ENCODE measurements at regions of chr15 and their contacts with region 1.

Region 1: DNA sequence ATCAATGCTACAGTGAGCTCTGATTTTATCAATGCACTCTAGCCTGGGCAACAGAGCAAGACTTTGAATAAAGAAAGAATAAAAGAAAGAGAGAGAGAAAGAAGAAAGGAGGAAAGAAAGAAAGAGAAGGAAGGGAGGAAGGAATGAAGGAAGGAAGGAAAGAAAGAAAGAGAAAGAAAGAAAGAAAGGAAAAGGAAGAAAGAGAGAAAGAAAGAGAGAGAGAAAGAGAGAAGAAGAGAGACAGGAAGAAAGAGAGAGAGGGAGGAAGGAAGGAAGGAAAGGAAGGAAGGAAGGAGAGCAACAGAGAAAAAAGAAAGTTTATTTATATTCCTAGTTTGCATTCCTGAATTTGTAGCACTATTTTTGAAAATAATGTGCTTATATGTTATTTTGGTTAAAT is 52.3 kb upstream of the ITGA11 start:
- DNase-seq: no peak
- ATAC-seq: no peak
- H3K4me3 ChIP-seq: no peak overlapping the region
- H3K27ac ChIP-seq: no peak overlapping the region
- H3K4me1 ChIP-seq: no peaks in the 10 kb centered on the region
- H3K27me3 ChIP-seq: no peaks in the 10 kb centered on the region; the same call in none of the 2 replicates
- CTCF ChIP-seq: no peak

Region 2: GRCh38 chr15:68412218-68412617 is 72.0 kb before region 1 on chr15:
- CTCF ChIA-PET with region 1: interaction called, 15 read pairs
- POLR2A ChIA-PET with region 1: no interaction called
- in situ Hi-C with region 1: no loop called
- intact Hi-C with region 1: no loop called
- DNase-seq: no peak
- ATAC-seq: no peak
- H3K4me3 ChIP-seq: no peak overlapping the region
- H3K27ac ChIP-seq: no peak overlapping the region
- H3K4me1 ChIP-seq: no peaks in the 10 kb centered on the region
- H3K27me3 ChIP-seq: no peaks in the 10 kb centered on the region
- CTCF ChIP-seq: no peak

Measured in Panc1 (cell line).